Naive thymus-derived CD4-positive, alpha-beta T cell (primary cell): ENCODE measurements at regions of chr7 and their contacts with region 1.

Region 1: GRCh38 chr7:6447581-6448199 is at the start of gene DAGLB:
- DNase-seq: peak; percentile 94 to 99 (median 97)
- ATAC-seq: peak; percentile 87
- H3K4me3 ChIP-seq: peak within 1 kb of the TSS; percentile 87
- H3K4me3 Mint-ChIP-seq: peak within 1 kb of the TSS; percentile 92 to 99 (median 96)
- H3K27ac ChIP-seq: peak within 1 kb of the TSS; percentile 80
- H3K27ac Mint-ChIP-seq: peak within 1 kb of the TSS; percentile 95 to 98 (median 95)
- H3K4me1 ChIP-seq: peaks cover 8 to 16% of the 10 kb centered on the region in 2 donors
- H3K4me1 Mint-ChIP-seq: peaks cover 27 to 51% (median 40%) of the 10 kb centered on the region in 7 donors
- H3K27me3 ChIP-seq: no peaks in the 10 kb centered on the region
- H3K27me3 Mint-ChIP-seq: peaks cover 0 to 3% (median 0%) of the 10 kb centered on the region in 5 donors
- total RNA-seq, gene DAGLB: 20.6 to 44.3 (median 39.8) TPM

Region 2: GRCh38 chr7:6008668-6009611 is 438.8 kb before region 1 on chr7 and contains the starts of genes AIMP2 and PMS2:
- CTCF ChIA-PET with region 1: no interaction called
- POLR2A ChIA-PET with region 1: no interaction called
- intact Hi-C with region 1: loop called in 1 of 2 experiments (anchors 1 kb)
- DNase-seq: peak; percentile 82 to 96 (median 93)
- ATAC-seq: peak; percentile 95
- H3K4me3 ChIP-seq: peak within 1 kb of the TSS; percentile 99
- H3K4me3 Mint-ChIP-seq: peak within 1 kb of the TSS; percentile 93 to 99 (median 95)
- H3K27ac ChIP-seq: peak within 1 kb of the TSS; percentile 82
- H3K27ac Mint-ChIP-seq: peak within 1 kb of the TSS; percentile 88 to 98 (median 96)
- H3K4me1 ChIP-seq: peaks cover 0 to 5% of the 10 kb centered on the region in 2 donors
- H3K4me1 Mint-ChIP-seq: peaks cover 7 to 52% (median 33%) of the 10 kb centered on the region in 7 donors
- H3K27me3 ChIP-seq: no peaks in the 10 kb centered on the region
- H3K27me3 Mint-ChIP-seq: no peaks in the 10 kb centered on the region
- total RNA-seq, gene AIMP2: 5.0 to 37.9 (median 11.8) TPM
- total RNA-seq, gene PMS2: 12.5 to 26.3 (median 23.5) TPM

Region 3: DNA sequence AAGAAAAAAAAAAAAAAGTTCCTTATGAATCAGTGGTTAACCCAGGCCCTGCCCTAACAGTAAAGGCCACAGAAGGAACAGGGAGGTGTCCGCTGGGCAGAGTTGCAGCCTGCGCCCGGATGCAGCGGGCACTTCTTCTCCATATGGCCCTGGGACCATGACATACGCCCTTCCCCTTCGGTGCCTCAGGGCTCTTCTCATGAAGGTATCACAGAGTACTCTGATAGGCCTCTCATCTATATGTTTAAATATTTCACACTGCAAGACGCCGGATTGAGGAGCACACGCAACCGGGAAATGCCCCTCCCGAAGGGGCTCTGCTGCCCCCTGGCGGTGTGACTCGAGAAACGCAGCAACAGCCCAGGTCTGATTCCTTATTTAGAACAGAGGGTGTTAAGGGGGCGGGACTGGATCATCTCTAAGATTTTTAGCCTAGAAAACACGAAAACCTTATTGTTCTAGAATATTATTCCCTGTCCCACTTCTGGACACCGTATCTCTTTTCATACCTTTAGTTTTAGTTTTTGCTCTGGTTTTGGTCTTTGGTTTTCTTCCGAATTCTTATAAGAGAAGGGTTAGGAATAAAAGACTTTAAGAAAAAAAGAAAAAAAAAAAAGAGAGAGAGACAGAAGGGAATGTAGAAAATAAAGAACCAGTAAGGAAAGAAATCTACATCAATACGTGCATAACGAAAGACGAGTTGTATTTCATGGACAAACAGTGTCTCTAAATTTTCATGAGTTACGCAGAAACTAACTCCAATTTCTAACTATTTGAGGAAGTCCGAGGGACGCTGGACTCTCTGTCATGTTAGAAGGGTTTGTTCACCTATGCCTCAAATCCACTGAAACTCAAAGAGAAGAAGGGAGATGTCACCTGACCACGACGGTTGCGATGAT is 12.0 kb before region 1 on chr7:
- CTCF ChIA-PET with region 1: interaction called, 12 read pairs
- POLR2A ChIA-PET with region 1: interaction called, 46 read pairs
- intact Hi-C with region 1: loop called (anchors 1 kb)
- DNase-seq: peak; percentile 80 to 95 (median 89)
- ATAC-seq: peak; percentile 96
- H3K4me3 ChIP-seq: peak overlapping the region; percentile 34
- H3K4me3 Mint-ChIP-seq: peak overlapping the region; percentile 75 to 90 (median 84)
- H3K27ac ChIP-seq: peak overlapping the region; percentile 70
- H3K27ac Mint-ChIP-seq: peak overlapping the region; percentile 81 to 97 (median 91)
- H3K4me1 ChIP-seq: peaks cover 6 to 27% of the 10 kb centered on the region in 2 donors
- H3K4me1 Mint-ChIP-seq: peaks cover 29 to 59% (median 53%) of the 10 kb centered on the region in 7 donors
- H3K27me3 ChIP-seq: no peaks in the 10 kb centered on the region
- H3K27me3 Mint-ChIP-seq: no peaks in the 10 kb centered on the region

Region 4: DNA sequence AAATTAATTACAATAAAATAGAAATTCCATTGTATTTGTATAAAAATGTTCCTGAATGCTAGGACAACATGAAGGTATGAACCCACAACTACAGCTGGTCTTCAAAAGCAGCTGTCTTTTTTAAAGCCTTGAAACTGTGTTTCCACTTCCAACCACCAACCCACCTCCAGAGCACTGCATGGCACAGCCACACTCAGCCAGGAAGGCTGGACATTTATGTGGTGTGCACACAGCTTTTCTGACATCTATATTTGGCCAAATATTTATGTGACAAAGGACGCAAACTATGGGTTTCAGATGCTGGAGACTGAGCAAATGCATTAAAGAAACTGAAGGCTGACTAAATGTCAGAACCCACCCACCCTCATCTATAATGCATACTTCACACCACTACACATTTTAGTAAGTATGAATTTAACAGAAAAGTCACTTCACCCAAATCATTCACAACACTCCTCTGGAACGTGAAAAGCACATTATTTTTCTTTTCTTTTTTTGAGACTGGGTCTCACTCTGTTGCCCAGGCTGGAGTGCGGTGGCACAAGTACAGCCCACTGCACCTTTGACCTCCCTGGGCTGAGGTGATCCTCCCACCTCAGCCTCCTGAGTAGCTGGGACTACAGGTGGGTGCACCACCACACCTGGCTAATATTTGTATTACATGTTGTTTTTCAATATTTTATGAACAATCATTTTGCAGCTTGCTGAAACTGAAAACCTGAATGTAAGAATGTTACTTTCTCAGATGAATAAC is 27.9 kb after region 1 on chr7:
- CTCF ChIA-PET with region 1: no interaction called
- POLR2A ChIA-PET with region 1: interaction called, 13 read pairs
- intact Hi-C with region 1: no loop called
- DNase-seq: no peak
- ATAC-seq: no peak
- H3K4me3 ChIP-seq: no peak overlapping the region
- H3K4me3 Mint-ChIP-seq: no peak overlapping the region
- H3K27ac ChIP-seq: no peak overlapping the region
- H3K27ac Mint-ChIP-seq: peak overlapping the region in 7 of 9 donors; percentile 2 to 72 (median 21)
- H3K4me1 ChIP-seq: peaks cover 0 to 4% of the 10 kb centered on the region in 2 donors
- H3K4me1 Mint-ChIP-seq: peaks cover 42 to 62% (median 54%) of the 10 kb centered on the region in 7 donors
- H3K27me3 ChIP-seq: no peaks in the 10 kb centered on the region
- H3K27me3 Mint-ChIP-seq: no peaks in the 10 kb centered on the region

Region 5: DNA sequence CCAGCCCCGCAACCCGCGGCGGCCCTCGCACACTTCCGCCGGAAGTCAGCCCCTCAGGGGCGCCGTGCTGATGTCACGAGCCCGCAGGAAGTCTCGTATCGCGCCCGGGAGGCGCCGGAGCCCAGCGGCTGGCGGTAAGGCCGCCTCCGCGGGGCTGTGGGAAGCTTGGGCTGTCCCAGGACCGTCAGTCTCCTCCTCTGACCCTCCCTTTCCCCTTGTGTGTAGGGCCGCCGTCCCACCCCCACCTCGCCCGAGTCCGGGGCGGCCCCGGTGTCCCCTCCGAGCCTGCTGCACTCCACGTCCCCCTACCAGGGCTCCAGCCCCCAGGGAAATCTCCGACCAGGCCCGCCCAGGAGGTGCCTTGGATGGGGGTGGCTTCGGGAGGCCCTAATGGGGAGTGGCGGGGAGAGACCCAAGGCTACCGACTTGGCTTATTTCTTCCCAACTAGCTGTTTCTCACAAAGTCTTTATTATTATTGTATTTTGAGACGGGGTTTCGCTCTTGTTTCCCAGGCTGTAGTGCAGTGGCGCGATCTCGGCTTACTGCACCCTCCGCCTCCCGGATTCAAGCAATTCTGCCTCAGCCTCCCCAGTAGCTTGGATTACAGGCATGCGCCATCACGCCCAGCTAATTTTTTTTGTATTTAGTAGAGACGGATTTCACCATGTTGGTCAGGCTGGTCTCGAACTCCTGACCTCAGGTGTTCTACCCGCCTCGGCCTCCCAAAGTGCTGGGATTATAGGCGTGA is 129.8 kb after region 1 on chr7 and contains the start of gene ZDHHC4:
- CTCF ChIA-PET with region 1: no interaction called
- POLR2A ChIA-PET with region 1: no interaction called
- intact Hi-C with region 1: loop called in 1 of 2 experiments (anchors 5 kb)
- DNase-seq: peak; percentile 75 to 90 (median 83)
- ATAC-seq: peak; percentile 97
- H3K4me3 ChIP-seq: peak within 1 kb of the TSS; percentile 76
- H3K4me3 Mint-ChIP-seq: peak within 1 kb of the TSS; percentile 83 to 91 (median 89)
- H3K27ac ChIP-seq: peak within 1 kb of the TSS; percentile 99
- H3K27ac Mint-ChIP-seq: peak within 1 kb of the TSS; percentile 83 to 96 (median 93)
- H3K4me1 ChIP-seq: no peaks in the 10 kb centered on the region
- H3K4me1 Mint-ChIP-seq: peaks cover 0 to 29% (median 16%) of the 10 kb centered on the region in 7 donors
- H3K27me3 ChIP-seq: no peaks in the 10 kb centered on the region
- H3K27me3 Mint-ChIP-seq: peaks cover 0 to 3% (median 0%) of the 10 kb centered on the region in 5 donors
- total RNA-seq, gene ZDHHC4: 25.2 to 42.2 (median 31.8) TPM

Region 6: DNA sequence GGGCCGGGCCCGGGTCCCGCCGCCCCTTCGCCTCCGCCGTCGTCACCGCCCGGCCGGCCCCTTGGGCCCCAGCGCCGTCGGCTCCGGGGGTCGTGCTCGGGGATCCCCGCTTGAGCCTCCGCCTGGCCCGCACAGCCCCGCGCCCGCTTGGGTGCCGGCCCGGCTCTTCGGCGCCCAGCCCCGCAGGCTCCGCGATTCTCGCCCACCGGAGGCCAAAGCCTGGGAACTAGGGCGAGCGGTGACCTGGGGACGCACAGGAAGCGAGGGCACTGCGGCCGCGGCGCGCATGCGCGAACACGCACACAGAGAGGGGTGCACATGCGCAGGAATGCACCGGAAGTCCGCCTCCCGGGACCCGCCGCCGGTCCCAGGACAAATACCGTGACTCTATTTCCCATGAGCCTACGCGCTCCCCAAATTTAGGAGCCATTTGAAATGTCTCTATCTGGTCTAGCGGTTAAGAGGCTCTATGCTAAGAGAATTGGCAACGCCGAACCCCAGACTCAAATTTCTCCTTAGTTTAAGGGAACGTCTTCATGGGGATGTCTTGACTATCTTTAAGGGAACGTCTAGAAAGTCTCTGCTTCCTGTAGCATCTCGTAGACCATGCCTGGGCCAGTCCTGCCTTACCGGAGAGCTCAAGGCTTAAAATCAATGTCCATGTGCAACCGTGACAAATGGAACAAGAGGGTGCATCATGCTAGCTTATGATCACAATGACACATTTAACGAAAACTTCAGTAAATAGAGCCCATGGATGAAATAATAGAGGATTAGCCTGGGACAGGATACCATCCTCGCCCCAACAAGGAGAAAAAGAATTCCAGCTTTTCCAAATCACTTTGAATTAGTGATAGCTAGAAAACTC is 259.2 kb after region 1 on chr7 and contains the start of gene ZNF12:
- CTCF ChIA-PET with region 1: no interaction called
- POLR2A ChIA-PET with region 1: no interaction called
- intact Hi-C with region 1: loop called in 1 of 2 experiments (anchors 2 kb)
- DNase-seq: peak; percentile 88 to 96 (median 92)
- ATAC-seq: peak; percentile 93
- H3K4me3 ChIP-seq: peak within 1 kb of the TSS; percentile 68
- H3K4me3 Mint-ChIP-seq: peak within 1 kb of the TSS; percentile 92 to 98 (median 94)
- H3K27ac ChIP-seq: peak within 1 kb of the TSS; percentile 85
- H3K27ac Mint-ChIP-seq: peak within 1 kb of the TSS; percentile 88 to 96 (median 92)
- H3K4me1 ChIP-seq: peaks cover 26 to 33% of the 10 kb centered on the region in 2 donors
- H3K4me1 Mint-ChIP-seq: peaks cover 34 to 55% (median 38%) of the 10 kb centered on the region in 7 donors
- H3K27me3 ChIP-seq: no peaks in the 10 kb centered on the region
- H3K27me3 Mint-ChIP-seq: peaks cover 0 to 8% (median 5%) of the 10 kb centered on the region in 5 donors
- total RNA-seq, gene ZNF12: 26.2 to 58.1 (median 29.3) TPM